ENCODE measurements at regions of chr15 and their contacts with region 1.

Region 1: GRCh38 chr15:57866149-57866736 is 159.7 kb downstream of the POLR2M start:
- DNase-seq: peak; percentile 19
- ATAC-seq: no peak
- H3K4me3 Mint-ChIP-seq: no peak overlapping the region
- H3K27ac Mint-ChIP-seq: no peak overlapping the region
- H3K4me1 Mint-ChIP-seq: peaks cover 9% of the 10 kb centered on the region
- H3K27me3 Mint-ChIP-seq: peaks cover 28% of the 10 kb centered on the region
- CTCF ChIP-seq: no peak

Region 2: DNA sequence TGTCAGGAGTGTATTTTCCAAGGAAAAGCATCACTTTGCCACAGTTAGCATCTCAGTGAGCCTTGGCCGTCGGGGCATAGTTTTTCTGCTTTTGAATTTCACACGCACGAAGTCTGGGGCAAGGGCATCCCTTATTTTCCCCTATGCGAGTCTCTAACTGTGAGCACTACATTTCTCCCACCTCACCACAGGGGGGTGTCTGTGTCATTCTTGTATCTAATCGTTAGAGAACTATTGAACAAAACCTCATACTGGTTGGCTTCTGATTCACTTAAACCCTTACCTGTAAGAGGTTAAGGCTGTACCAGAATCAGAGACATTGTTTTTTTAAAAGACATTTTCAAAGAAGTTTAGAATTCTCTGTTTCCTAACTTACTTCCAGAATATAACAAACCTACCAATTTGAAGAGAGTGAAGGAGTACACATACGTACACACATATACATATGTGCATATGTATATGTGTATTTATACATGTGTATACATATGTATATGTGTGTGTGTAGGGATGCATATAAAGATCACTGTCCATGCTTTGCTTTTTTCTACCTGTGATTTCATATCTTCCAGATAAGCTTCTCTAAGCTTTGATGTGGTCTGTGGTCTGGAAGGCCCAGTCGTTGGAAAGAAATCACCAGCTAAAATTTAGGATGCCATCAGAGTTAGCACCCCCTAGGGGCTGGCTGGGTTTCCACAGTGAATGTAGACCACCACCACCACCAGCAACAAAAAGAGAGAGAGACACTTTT is 225.1 kb before region 1 on chr15:
- CTCF ChIA-PET with region 1: interaction called, 7 read pairs
- POLR2A ChIA-PET with region 1: no interaction called
- intact Hi-C with region 1: loop called (anchors 10 kb)
- DNase-seq: no peak
- ATAC-seq: no peak
- H3K4me3 Mint-ChIP-seq: no peak overlapping the region
- H3K27ac Mint-ChIP-seq: no peak overlapping the region
- H3K4me1 Mint-ChIP-seq: peaks cover 2% of the 10 kb centered on the region
- H3K27me3 Mint-ChIP-seq: no peaks in the 10 kb centered on the region
- CTCF ChIP-seq: no peak

Region 3: GRCh38 chr15:57932348-57932747 is 66.1 kb after region 1 on chr15:
- CTCF ChIA-PET with region 1: no interaction called
- POLR2A ChIA-PET with region 1: no interaction called
- intact Hi-C with region 1: no loop called
- DNase-seq: no peak
- ATAC-seq: no peak
- H3K4me3 Mint-ChIP-seq: no peak overlapping the region
- H3K27ac Mint-ChIP-seq: no peak overlapping the region
- H3K4me1 Mint-ChIP-seq: no peaks in the 10 kb centered on the region
- H3K27me3 Mint-ChIP-seq: peaks cover 12% of the 10 kb centered on the region
- CTCF ChIP-seq: no peak

Region 4: DNA sequence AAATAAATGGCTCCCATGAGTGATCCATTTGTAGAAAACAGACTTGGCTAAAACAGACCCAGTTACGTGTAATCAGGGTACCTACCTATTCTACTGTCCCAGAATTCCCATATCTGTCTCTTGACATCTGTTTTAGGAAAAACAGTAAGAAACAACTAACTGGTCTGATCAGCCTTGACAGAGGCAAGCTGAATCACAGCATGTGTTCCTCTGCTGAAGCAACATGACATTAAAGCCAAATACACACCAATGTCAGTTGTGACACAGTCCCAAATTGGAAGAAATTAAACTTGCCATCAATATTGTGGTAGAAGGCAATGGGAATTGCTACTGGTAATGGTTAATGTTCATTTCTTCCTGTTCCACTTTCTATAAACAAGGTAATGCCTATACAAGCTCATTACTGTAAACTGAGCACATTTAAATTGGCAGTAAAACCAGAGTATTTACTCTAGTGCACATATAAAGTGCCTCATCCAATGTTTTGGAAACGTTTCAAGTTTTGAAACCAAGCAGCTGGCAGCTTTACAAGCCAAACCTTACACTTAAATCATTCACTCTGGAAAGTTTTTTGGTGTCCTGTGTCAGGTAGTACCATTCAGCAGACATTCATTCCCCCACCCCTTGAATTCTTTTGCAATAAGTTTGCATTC is 172.3 kb after region 1 on chr15:
- CTCF ChIA-PET with region 1: no interaction called
- POLR2A ChIA-PET with region 1: no interaction called
- intact Hi-C with region 1: no loop called
- DNase-seq: no peak
- ATAC-seq: no peak
- H3K4me3 Mint-ChIP-seq: no peak overlapping the region
- H3K27ac Mint-ChIP-seq: no peak overlapping the region
- H3K4me1 Mint-ChIP-seq: no peaks in the 10 kb centered on the region
- H3K27me3 Mint-ChIP-seq: peaks cover 5% of the 10 kb centered on the region
- CTCF ChIP-seq: no peak

Region 5: GRCh38 chr15:58066042-58066867 is 200.0 kb after region 1 on chr15:
- CTCF ChIA-PET with region 1: no interaction called
- POLR2A ChIA-PET with region 1: no interaction called
- intact Hi-C with region 1: loop called (anchors 5 kb)
- DNase-seq: peak; percentile 46
- ATAC-seq: peak; percentile 71
- H3K4me3 Mint-ChIP-seq: peak overlapping the region; percentile 53
- H3K27ac Mint-ChIP-seq: no peak overlapping the region
- H3K4me1 Mint-ChIP-seq: peaks cover 6% of the 10 kb centered on the region
- H3K27me3 Mint-ChIP-seq: peaks cover 58% of the 10 kb centered on the region
- CTCF ChIP-seq: no peak

Measured in activated B cell treated with CpG ODN at 0.5 μM for 24 hours (primary cell).